GM12878 (cell line): ENCODE measurements at regions of chrX and their contacts with region 1.

Region 1: DNA sequence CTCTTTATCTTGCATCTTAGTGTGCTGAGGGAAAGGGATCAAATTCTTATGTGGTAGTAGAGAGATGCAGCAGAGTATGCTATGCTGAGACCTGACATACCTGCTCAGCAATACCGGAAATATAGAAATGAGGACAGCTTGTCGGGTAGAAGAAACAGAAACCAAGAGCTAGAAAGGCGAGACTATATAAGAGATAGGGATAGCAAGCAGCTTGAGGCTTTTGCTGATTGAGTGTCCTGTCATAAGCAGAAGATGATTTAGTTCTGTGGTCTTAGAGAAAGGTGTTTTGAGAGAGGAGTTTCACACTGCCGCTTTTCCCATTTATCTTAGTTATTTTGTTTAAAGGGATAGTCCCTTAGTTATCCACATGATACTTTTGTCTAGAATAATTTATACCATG is 31.7 kb downstream of the USP9X start:
- DNase-seq: peak; percentile 71
- ATAC-seq: peak; percentile 78
- H3K4me3 ChIP-seq: 0 out of 2 replicates have a peak overlapping the region, but pooled peaks have one; percentile 26
- H3K27ac ChIP-seq: peak overlapping the region; percentile 65; the same call in 1 of the 2 replicates
- H3K4me1 ChIP-seq: peaks cover 40% of the 10 kb centered on the region
- H3K27me3 ChIP-seq: no peaks in the 10 kb centered on the region
- CTCF ChIP-seq: no peak
- EP300 ChIP-seq: peak in 1 of 2 experiments; percentile 57; a peak in 1 of 4 replicates
- POLR2A ChIP-seq: no peak
- RAD21 ChIP-seq: no peak

Region 2: GRCh38 chrX:40735325-40736169 is 381.4 kb before region 1 on chrX and contains the start of gene MED14:
- CTCF ChIA-PET with region 1: interaction called, 6 read pairs
- POLR2A ChIA-PET with region 1: interaction called, 4 read pairs
- RAD21 ChIA-PET with region 1: interaction called, 5 read pairs
- SMC1A ChIA-PET with region 1: interaction called, 5 read pairs
- in situ Hi-C with region 1: no loop called
- intact Hi-C with region 1: loop called (anchors 5 kb)
- DNase-seq: peak; percentile 73
- ATAC-seq: peak; percentile 92
- H3K4me3 ChIP-seq: peak within 1 kb of the TSS; percentile 86
- H3K27ac ChIP-seq: peak within 1 kb of the TSS; percentile 92
- H3K4me1 ChIP-seq: no peaks in the 10 kb centered on the region; the same call in 1 of the 2 replicates
- H3K27me3 ChIP-seq: no peaks in the 10 kb centered on the region
- CTCF ChIP-seq: peak; percentile 62 to 64 (median 62)
- EP300 ChIP-seq: 0 out of 4 replicates have a peak, but pooled peaks of 1 of the 2 experiments have one; percentile 5
- POLR2A ChIP-seq: peak; percentile 93
- RAD21 ChIP-seq: no peak
- polyA plus RNA-seq, gene MED14: 8.8 to 17.0 TPM

Region 3: DNA sequence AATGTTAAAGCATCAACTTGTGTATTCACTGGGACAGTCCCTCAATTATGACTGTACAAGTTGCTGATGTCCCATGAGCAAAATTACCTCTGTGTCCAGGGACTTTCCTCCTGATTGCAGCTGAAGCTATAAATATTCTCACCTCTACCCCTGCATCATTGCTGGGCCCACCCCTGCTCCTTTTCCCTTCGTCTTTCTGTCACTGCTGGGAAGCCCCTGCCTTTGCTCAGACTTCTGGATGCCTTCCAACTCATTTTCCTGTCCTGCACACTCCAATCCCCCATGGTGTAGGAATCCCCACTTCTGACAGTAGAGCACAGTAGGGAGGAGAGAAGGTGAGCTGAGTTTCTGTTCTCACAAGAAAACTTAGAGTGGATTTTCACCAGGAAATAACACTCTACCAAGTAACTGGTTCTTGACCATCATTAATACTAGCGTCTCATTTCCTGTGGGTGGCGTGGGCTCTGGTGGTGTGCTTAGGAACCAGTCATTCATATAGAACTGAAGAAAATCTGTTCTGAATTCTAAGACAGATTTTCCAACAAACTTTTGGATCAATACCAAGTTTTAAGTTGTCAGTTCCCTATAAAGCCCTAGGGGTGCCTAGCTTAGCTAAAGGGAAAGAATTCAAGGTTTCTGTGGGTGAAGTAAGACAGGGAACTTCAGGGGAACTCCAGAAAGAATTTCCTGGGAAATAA is 245.4 kb before region 1 on chrX:
- CTCF ChIA-PET with region 1: interaction called, 105 read pairs
- POLR2A ChIA-PET with region 1: no interaction called
- RAD21 ChIA-PET with region 1: interaction called, 67 read pairs
- SMC1A ChIA-PET with region 1: interaction called, 109 read pairs
- in situ Hi-C with region 1: loop called (anchors 5 kb)
- intact Hi-C with region 1: loop called (anchors 2 kb)
- DNase-seq: peak; percentile 87
- ATAC-seq: peak; percentile 89
- H3K4me3 ChIP-seq: no peak overlapping the region
- H3K27ac ChIP-seq: peak overlapping the region; percentile 68
- H3K4me1 ChIP-seq: peaks cover 6% of the 10 kb centered on the region; the same call in 1 of the 2 replicates
- H3K27me3 ChIP-seq: no peaks in the 10 kb centered on the region
- CTCF ChIP-seq: peak in 1 of 3 experiments; percentile 27; a peak in 1 of 6 replicates
- EP300 ChIP-seq: peak; percentile 54 to 71; a peak in 2 of 4 replicates
- POLR2A ChIP-seq: no peak
- RAD21 ChIP-seq: peak; percentile 25; the same call in 1 of the 2 replicates

Region 4: DNA sequence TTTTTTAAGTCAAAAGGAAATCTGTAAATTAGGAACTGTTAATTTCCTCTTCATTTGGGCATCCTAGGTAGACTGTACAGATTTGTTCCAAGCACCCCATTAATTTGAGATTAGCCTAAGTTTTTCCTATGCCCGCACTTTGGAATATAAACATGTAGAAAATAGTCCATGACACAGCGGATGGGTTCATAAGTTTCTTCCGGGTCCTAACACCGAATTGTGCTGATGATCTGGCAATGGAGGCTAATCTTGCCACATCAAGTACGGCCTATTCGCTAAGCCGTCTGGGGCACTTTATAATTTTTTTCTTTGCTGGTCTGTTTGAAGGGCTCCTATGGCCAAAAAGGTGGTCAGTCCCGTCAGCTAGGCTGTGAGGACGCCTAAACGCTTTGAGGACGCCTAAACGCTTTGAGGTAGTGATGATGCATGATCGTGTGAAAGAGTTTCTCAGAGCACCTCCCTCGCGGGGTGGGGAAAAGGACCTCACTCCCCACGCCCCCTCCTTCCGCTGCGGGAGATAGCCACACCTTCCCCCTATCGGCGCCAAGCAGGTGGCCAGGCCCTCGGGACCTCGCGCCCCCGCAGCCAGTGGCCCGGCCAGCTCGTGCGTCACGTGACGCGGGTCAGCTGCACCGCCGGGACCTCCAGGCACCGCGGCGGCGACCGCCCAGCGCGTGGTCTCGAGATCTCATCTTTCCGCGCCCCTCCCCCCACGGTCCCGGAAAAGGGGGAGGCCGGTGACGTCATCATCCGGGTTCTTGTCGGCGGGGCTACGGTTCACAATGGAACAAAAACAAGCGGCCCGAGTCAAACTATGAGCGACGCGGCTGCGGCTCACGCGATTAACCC is 32.7 kb before region 1 on chrX:
- CTCF ChIA-PET with region 1: interaction called, 23 read pairs
- POLR2A ChIA-PET with region 1: interaction called, 16 read pairs
- RAD21 ChIA-PET with region 1: interaction called, 78 read pairs
- SMC1A ChIA-PET with region 1: interaction called, 52 read pairs
- in situ Hi-C with region 1: no loop called
- intact Hi-C with region 1: loop called (anchors 2 kb)
- DNase-seq: peak; percentile 86
- ATAC-seq: peak; percentile 76
- H3K4me3 ChIP-seq: peak overlapping the region; percentile 93
- H3K27ac ChIP-seq: peak overlapping the region; percentile 97
- H3K4me1 ChIP-seq: no peaks in the 10 kb centered on the region
- H3K27me3 ChIP-seq: no peaks in the 10 kb centered on the region
- CTCF ChIP-seq: 0 out of 6 replicates have a peak, but pooled peaks of 1 of the 3 experiments have one; percentile 2
- EP300 ChIP-seq: peak; percentile 47 to 68
- POLR2A ChIP-seq: peak; percentile 76
- RAD21 ChIP-seq: no peak

Region 5: GRCh38 chrX:41096339-41096955 is 20.5 kb before region 1 on chrX:
- CTCF ChIA-PET with region 1: interaction called, 29 read pairs
- POLR2A ChIA-PET with region 1: interaction called, 6 read pairs
- RAD21 ChIA-PET with region 1: interaction called, 7 read pairs
- SMC1A ChIA-PET with region 1: interaction called, 52 read pairs
- in situ Hi-C with region 1: no loop called
- intact Hi-C with region 1: no loop called
- DNase-seq: no peak
- ATAC-seq: peak; percentile 10; the same call in 1 of the 3 replicates
- H3K4me3 ChIP-seq: no peak overlapping the region
- H3K27ac ChIP-seq: no peak overlapping the region
- H3K4me1 ChIP-seq: peaks cover 3% of the 10 kb centered on the region; the same call in 1 of the 2 replicates
- H3K27me3 ChIP-seq: no peaks in the 10 kb centered on the region
- CTCF ChIP-seq: no peak
- EP300 ChIP-seq: no peak
- POLR2A ChIP-seq: no peak
- RAD21 ChIP-seq: no peak

Region 6: DNA sequence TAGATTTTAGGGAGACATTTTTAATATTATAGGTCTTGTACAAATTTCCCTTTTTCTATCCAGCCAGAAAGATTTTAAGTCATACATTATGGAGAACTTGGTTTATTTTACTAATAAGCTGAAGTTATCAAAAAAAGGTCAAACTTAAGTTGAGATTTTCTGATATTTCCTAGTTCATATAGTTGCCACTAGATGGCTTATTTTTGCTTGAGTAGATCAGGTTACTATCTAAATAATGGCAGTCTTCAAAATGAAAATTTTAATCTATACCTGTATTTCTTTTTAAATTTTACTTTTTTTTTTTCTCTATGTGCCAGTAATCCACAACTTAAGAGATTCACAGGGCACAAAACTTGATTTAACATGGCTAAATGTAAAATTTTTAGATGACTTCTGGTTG is 20.6 kb after region 1 on chrX:
- CTCF ChIA-PET with region 1: interaction called, 14 read pairs
- POLR2A ChIA-PET with region 1: no interaction called
- RAD21 ChIA-PET with region 1: interaction called, 4 read pairs
- SMC1A ChIA-PET with region 1: interaction called, 4 read pairs
- in situ Hi-C with region 1: no loop called
- intact Hi-C with region 1: no loop called
- DNase-seq: no peak
- ATAC-seq: peak; percentile 49
- H3K4me3 ChIP-seq: no peak overlapping the region
- H3K27ac ChIP-seq: no peak overlapping the region
- H3K4me1 ChIP-seq: no peaks in the 10 kb centered on the region
- H3K27me3 ChIP-seq: no peaks in the 10 kb centered on the region
- CTCF ChIP-seq: peak in 2 of 3 experiments; percentile 30 to 42; a peak in 4 of 6 replicates
- EP300 ChIP-seq: no peak
- POLR2A ChIP-seq: no peak
- RAD21 ChIP-seq: peak; percentile 32; the same call in 1 of the 2 replicates